ENCODE measurements at regions of chr1 and their contacts with region 1.

Region 1: GRCh38 chr1:37486680-37487618 is 12.6 kb downstream of the ZC3H12A start:
- DNase-seq: peak in 1 of 2 donors; percentile 94
- H3K4me3 ChIP-seq: no peak overlapping the region
- H3K27ac ChIP-seq: peak overlapping the region; percentile 71
- H3K4me1 ChIP-seq: peaks cover 39% of the 10 kb centered on the region
- H3K27me3 ChIP-seq: no peaks in the 10 kb centered on the region
- CTCF ChIP-seq: peak; percentile 98 to 99 (median 98)
- POLR2A ChIP-seq: no peak

Region 2: DNA sequence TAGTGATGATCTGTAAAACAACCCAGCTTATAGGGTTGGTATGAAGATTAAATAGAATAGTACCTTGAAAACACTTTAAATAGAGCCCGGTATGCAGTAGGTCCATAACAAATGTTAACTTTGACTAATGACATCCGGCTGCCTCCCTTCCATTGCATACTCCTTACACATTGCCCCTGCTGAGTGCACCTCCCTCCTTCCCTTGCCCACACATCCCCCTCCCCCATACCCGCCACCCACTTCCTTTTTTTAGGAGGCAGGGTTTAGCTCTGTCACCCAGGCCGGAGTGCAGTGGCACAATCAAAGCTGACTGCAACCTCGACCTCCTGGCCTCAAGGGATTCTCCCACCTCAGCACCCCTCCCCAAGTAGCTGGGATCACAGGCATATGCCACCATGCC is 37.0 kb before region 1 on chr1:
- intact Hi-C with region 1: loop called (anchors 5 kb)
- DNase-seq: no peak
- H3K4me3 ChIP-seq: no peak overlapping the region
- H3K27ac ChIP-seq: no peak overlapping the region
- H3K4me1 ChIP-seq: peaks cover 4% of the 10 kb centered on the region
- H3K27me3 ChIP-seq: no peaks in the 10 kb centered on the region
- CTCF ChIP-seq: no peak
- POLR2A ChIP-seq: no peak

Measured in vagina (tissue), 2 donors.